Heart right ventricle (tissue), 16 donors: ENCODE measurements at regions of chr2 and their contacts with region 1.

Region 1: DNA sequence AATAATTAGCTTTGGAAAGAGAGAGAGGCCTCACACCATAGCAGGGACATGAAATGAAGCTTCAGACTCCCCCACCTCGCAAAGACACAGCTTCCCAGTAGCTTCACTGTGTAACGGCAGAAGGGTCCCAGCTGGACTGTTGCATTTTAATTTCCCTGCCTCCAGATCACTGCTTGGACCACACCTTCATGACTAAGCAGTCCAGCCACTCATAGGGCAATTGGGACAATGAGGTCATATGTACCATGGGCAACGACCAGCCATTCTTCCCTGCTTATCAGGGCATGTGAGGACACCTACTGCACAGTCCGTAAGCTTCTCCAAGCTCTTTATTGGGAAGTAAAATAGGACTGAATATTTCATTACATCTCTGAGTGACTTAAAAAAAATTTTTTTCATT is 183.0 kb downstream of the MREG start:
- DNase-seq: peak in 1 of 2 donors; percentile 25
- ATAC-seq: peak; percentile 73 to 93 (median 86)
- H3K4me3 ChIP-seq: no peak overlapping the region
- H3K27ac ChIP-seq: peak overlapping the region in 7 of 10 donors; percentile 14 to 63 (median 51)
- H3K4me1 ChIP-seq: peaks cover 0 to 63% (median 14%) of the 10 kb centered on the region in 9 donors
- H3K27me3 ChIP-seq: no peaks in the 10 kb centered on the region
- CTCF ChIP-seq: peak in 1 of 9 donors; percentile 4

Region 2: GRCh38 chr2:215435809-215436704 is 394.2 kb before region 1 on chr2 and contains the start of gene FN1:
- intact Hi-C with region 1: loop called in 1 of 10 experiments (anchors 10 kb)
- DNase-seq: peak; percentile 91 to 94
- ATAC-seq: peak; percentile 89 to 95 (median 91)
- H3K4me3 ChIP-seq: peak within 1 kb of the TSS; percentile 42 to 77 (median 64)
- H3K27ac ChIP-seq: peak within 1 kb of the TSS; percentile 85 to 99 (median 90)
- H3K4me1 ChIP-seq: peaks cover 0 to 32% (median 0%) of the 10 kb centered on the region in 9 donors
- H3K27me3 ChIP-seq: peaks cover 0 to 73% (median 4%) of the 10 kb centered on the region in 7 donors
- CTCF ChIP-seq: no peak
- total RNA-seq, gene FN1: 67.8 to 888 (median 136) TPM

Region 3: GRCh38 chr2:215454519-215455246 is 375.6 kb before region 1 on chr2:
- intact Hi-C with region 1: loop called in 3 of 10 experiments (anchors 10 kb)
- DNase-seq: no peak
- ATAC-seq: no peak
- H3K4me3 ChIP-seq: no peak overlapping the region
- H3K27ac ChIP-seq: no peak overlapping the region
- H3K4me1 ChIP-seq: no peaks in the 10 kb centered on the region
- H3K27me3 ChIP-seq: peaks cover 0 to 5% (median 0%) of the 10 kb centered on the region in 7 donors
- CTCF ChIP-seq: peak; percentile 50 to 87 (median 76)

Region 4: DNA sequence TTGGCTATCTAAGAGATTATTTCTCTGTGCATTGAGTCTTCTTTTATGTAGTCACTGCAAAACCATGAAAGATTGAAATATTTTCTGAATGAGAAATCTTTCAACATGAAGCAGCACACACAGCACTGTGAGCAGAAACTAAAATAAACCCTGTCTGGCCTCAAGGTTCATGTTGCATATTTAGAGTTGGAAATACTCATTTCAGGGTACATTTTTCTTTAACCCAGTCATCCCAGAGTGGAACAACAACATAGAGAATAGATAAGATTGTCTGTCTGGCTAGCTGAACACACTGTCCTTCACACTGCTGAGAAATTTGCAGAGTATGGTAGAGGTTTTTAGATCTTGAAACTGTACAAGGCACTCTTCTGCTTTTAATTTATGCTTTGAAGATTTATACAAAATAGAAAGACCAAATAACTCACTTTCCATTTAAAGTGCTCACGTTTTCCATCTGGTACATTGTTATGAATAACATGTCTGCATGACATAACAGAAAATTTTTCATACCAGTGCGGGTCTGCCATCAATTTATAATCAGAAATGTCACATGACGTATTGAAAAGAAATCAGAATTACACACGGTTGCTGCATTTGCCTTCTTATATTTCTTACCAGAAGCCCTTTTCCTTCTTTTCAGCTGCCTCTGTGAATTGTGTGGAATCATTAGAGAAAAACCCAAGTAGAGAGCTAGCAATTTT is 369.5 kb before region 1 on chr2:
- intact Hi-C with region 1: loop called in 4 of 10 experiments (anchors 10 kb)
- DNase-seq: no peak
- ATAC-seq: peak in 5 of 8 donors; percentile 61 to 91 (median 66)
- H3K4me3 ChIP-seq: no peak overlapping the region
- H3K27ac ChIP-seq: peak overlapping the region in 5 of 10 donors; percentile 4 to 40 (median 14)
- H3K4me1 ChIP-seq: peaks cover 0 to 15% (median 0%) of the 10 kb centered on the region in 9 donors
- H3K27me3 ChIP-seq: no peaks in the 10 kb centered on the region
- CTCF ChIP-seq: no peak

Region 5: DNA sequence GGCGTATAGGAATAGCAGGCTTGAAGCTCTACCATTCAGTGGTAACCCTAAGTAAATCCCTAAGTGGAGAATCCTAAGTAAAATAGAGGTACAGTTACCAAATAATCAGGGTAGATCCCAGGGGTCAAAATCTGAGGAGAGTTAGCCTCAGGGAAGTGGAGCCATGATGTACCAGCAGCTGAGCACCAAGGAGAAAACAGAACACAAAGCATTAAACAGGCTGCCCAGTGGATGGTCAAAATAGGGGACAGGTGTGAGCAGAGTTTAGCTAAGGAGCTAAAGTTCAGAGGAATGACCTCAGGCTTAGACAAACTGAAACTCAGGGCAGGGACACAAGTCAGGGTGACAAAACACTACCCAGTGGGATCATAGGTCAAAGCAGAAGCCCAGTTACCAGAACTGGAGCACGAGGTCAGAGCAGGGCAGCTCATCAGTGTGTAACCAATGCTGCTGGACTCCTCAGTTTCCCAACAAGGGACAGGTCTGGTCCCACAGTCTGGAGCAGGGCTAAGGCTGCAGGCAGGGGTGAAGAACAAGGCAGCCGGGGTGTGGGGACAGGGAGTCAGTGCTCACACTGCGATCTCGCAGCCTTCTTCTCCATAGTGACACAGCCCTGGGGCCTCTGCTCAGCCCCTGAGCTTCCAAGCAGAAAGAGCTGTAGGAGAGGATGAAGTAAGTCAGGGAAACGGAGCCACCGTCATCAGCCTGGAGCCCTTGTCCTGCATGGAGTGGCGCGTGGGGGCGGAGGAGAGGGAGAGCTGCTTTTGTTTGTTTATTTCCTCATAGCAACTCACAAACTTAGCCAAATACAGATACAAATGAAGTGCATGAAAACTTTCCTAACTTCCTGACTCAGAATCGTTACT is 81.0 kb before region 1 on chr2:
- intact Hi-C with region 1: no loop called
- DNase-seq: peak; percentile 63 to 82
- ATAC-seq: peak; percentile 75 to 91 (median 88)
- H3K4me3 ChIP-seq: no peak overlapping the region
- H3K27ac ChIP-seq: peak overlapping the region in 8 of 10 donors; percentile 22 to 84 (median 54)
- H3K4me1 ChIP-seq: peaks cover 5 to 59% (median 17%) of the 10 kb centered on the region in 9 donors
- H3K27me3 ChIP-seq: no peaks in the 10 kb centered on the region
- CTCF ChIP-seq: no peak

Region 6: DNA sequence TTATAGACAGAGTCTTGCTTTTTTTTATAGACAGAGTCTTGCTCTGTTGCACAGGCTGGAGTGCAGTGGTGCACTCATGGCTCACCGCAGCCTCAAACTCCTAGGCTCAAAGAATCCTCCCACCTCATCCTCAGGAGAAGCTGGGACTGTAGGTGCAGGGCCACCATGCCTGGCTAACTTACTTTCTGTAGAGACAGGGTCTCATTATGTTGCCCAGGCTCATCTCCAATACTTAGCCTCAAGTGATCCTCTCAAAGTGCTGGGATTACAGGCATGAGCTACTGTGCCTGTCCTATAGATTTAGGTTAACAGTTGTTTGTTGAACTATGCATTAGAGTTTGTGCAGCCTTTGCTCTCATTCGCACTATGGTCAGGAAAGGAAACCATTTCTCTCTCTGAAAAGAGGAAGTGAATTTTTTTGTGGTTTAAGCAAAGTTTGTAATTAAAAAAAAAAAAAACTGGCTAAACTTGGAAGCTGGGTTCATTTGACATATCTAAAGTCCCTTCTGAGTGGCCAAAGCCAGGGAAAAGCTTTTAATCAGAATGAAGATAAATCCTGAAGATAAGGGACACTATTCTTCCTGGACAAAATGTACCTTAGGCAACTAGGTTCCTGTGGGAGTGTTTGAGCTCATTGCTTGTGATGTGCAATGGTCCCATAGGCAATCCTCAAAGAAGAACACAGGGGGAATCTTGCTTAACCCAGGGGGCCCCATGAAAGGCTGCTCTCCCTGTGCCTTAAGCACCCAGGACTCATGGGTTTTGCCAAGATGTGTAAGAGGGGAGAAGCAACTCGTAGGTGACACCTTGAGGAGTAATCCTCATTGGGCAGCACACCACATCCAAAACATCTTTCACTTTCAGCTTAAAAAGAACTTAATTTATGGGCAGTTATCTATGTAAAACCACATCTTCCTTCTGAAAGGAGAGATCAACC is 18.6 kb before region 1 on chr2:
- intact Hi-C with region 1: no loop called
- DNase-seq: no peak
- ATAC-seq: no peak
- H3K4me3 ChIP-seq: no peak overlapping the region
- H3K27ac ChIP-seq: no peak overlapping the region
- H3K4me1 ChIP-seq: peaks cover 0 to 16% (median 8%) of the 10 kb centered on the region in 9 donors
- H3K27me3 ChIP-seq: no peaks in the 10 kb centered on the region
- CTCF ChIP-seq: no peak